RWPE1 (cell line): ENCODE measurements at regions of chr12 and their contacts with region 1.

Region 1: DNA sequence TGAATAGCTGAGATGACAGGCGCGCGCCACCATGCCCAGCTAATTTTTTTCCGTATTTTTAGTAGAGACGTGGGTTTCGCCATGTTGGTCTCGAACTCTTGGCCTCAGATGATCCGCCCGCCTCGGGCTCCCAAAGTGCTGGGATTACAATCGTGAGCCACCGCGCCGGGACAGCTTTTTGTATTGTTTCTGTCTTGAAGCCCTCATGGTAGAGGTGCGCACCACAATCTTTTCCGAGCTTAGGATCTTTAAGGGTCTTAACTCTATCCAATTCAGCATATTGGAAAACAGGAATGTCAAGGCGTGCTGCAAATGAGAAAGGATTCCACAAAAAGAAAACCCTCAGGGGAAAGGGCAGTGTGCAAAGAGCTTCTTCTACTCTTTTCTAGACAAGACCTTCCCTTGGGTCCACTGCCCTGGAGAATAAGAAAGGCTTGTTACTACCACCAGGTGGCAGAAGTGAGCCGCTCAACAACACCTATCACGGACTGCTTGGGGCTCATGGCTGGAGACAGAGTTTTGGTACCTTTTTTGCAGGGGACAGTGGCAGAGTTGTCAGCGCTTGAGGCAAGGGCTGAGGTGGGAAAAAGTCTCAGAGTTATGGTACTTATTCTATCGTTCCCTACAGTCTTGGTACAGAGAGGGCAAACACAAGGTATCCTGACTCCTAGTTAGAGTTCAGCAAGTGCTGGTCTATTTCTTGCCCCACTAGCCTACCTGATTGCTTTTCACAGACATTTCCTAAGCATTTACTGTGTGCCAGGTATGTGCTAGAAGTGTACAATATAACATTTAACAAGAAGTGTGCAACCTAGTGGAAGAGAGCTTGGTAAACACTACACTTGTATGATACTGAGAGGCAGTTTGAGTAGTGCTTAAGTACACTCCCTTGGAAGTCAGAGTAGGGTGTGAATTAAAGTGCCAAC is 16.4 kb upstream of the SP7 start:
- DNase-seq: peak; percentile 67
- H3K27ac ChIP-seq: peak overlapping the region; percentile 15; the same call in 1 of the 2 replicates
- CTCF ChIP-seq: peak; percentile 81

Region 2: GRCh38 chr12:53340398-53340797 is 12.2 kb before region 1 on chr12:
- CTCF ChIA-PET with region 1: no interaction called
- POLR2A ChIA-PET with region 1: no interaction called
- DNase-seq: no peak
- H3K27ac ChIP-seq: no peak overlapping the region
- CTCF ChIP-seq: no peak

Region 3: GRCh38 chr12:53380104-53380793 is 27.7 kb after region 1 on chr12 and contains the start of gene SP1:
- CTCF ChIA-PET with region 1: interaction called, 44 read pairs
- POLR2A ChIA-PET with region 1: interaction called, 5 read pairs
- DNase-seq: peak; percentile 87
- H3K27ac ChIP-seq: peak within 1 kb of the TSS; percentile 97
- CTCF ChIP-seq: no peak

Region 4: DNA sequence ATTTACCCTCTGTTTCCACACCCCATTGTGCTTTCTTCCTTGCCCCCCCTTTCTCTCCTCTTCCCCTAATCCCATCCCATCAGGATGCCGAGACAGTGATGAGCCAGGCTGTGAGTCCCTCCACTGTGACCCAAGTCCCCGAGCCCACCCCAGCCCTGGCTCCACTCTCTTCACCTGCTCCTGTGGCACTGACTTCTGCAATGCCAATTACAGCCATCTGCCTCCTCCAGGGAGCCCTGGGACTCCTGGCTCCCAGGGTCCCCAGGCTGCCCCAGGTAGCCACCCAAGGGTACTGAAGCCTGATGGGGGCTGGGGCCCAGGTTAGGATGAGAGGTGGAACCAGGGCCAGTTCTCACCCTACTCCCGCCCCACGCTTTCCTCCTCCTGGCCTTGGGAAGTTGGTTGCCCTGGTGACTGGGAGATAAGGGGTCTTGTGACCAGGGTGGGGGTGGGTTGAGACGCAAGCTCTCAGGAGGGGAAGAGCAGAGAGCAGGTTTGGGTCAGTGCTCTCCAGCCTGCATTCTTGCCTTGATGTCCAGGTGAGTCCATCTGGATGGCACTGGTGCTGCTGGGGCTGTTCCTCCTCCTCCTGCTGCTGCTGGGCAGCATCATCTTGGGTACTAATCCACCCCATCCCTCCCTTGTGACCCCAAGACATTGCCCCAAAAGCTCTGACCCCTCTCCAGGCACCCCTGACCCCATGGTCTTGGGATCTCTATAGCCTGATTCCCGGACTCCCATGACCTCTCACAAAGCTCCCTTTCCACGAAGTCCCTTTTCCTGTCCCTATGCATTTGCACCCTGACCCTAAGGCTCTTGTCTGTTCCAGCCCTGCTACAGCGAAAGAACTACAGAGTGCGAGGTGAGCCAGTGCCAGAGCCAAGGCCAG is 72.3 kb after region 1 on chr12:
- CTCF ChIA-PET with region 1: interaction called, 31 read pairs
- POLR2A ChIA-PET with region 1: no interaction called
- DNase-seq: no peak
- H3K27ac ChIP-seq: no peak overlapping the region
- CTCF ChIP-seq: no peak